PC-3 (cell line): ENCODE measurements at regions of chr4 and their contacts with region 1.

Region 1: GRCh38 chr4:105146276-105147015 is at the start of gene TET2:
- DNase-seq: peak; percentile 72
- ATAC-seq: peak; percentile 78
- H3K4me3 ChIP-seq: peak within 1 kb of the TSS; percentile 99
- H3K27ac ChIP-seq: peak within 1 kb of the TSS; percentile 58
- H3K4me1 ChIP-seq: peaks cover 22% of the 10 kb centered on the region
- H3K27me3 ChIP-seq: no peaks in the 10 kb centered on the region
- CTCF ChIP-seq: no peak
- total RNA-seq, gene TET2: 5.6 and 5.8 TPM in 2 replicates

Region 2: GRCh38 chr4:105196523-105197145 is 50.2 kb after region 1 on chr4:
- CTCF ChIA-PET with region 1: no interaction called
- POLR2A ChIA-PET with region 1: no interaction called
- intact Hi-C with region 1: loop called (anchors 2 kb)
- DNase-seq: peak; percentile 56
- ATAC-seq: peak; percentile 35; the same call in 1 of the 2 replicates
- H3K4me3 ChIP-seq: no peak overlapping the region
- H3K27ac ChIP-seq: peak overlapping the region; percentile 28; the same call in 1 of the 2 replicates
- H3K4me1 ChIP-seq: peaks cover 57% of the 10 kb centered on the region
- H3K27me3 ChIP-seq: no peaks in the 10 kb centered on the region
- CTCF ChIP-seq: peak; percentile 52

Region 3: DNA sequence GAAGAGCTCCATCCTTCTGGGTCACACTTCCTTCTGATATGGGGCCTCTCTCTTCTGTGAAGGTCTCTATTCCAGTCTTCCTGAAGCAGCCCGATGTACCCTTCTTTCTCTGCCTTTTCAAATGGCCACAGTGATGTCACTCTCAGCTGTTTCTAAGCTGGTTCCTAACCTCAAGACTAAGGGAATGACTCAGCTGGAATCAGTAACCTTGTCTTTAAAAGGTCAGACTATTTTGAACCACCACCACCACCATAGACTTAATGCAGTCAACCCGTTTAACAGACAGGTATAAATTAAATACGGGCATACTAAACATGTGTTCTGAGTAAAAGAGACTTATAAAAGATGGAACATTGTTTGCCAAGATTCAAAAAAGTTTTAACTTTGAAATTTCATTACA is 206.4 kb after region 1 on chr4:
- CTCF ChIA-PET with region 1: no interaction called
- POLR2A ChIA-PET with region 1: no interaction called
- intact Hi-C with region 1: loop called (anchors 10 kb)
- DNase-seq: no peak
- ATAC-seq: no peak
- H3K4me3 ChIP-seq: no peak overlapping the region
- H3K27ac ChIP-seq: no peak overlapping the region
- H3K4me1 ChIP-seq: no peaks in the 10 kb centered on the region
- H3K27me3 ChIP-seq: no peaks in the 10 kb centered on the region
- CTCF ChIP-seq: no peak

Region 4: GRCh38 chr4:105399532-105400161 is 253.2 kb after region 1 on chr4:
- CTCF ChIA-PET with region 1: no interaction called
- POLR2A ChIA-PET with region 1: no interaction called
- intact Hi-C with region 1: loop called (anchors 10 kb)
- DNase-seq: peak; percentile 78
- ATAC-seq: peak; percentile 99
- H3K4me3 ChIP-seq: no peak overlapping the region
- H3K27ac ChIP-seq: peak overlapping the region; percentile 13
- H3K4me1 ChIP-seq: peaks cover 26% of the 10 kb centered on the region
- H3K27me3 ChIP-seq: no peaks in the 10 kb centered on the region
- CTCF ChIP-seq: no peak